BJ (cell line): ENCODE measurements at regions of chr18 and their contacts with region 1.

Region 1: GRCh38 chr18:55588001-55588869 is at the start of gene TCF4:
- DNase-seq: no peak
- H3K4me3 ChIP-seq: peak within 1 kb of the TSS; percentile 74
- H3K27me3 ChIP-seq: no peaks in the 10 kb centered on the region
- CTCF ChIP-seq: no peak
- polyA plus RNA-seq, gene TCF4: 65.8 and 68.3 TPM in 2 replicates

Region 2: GRCh38 chr18:55322178-55322735 is 266.0 kb before region 1 on chr18:
- CTCF ChIA-PET with region 1: no interaction called
- POLR2A ChIA-PET with region 1: interaction called, 11 read pairs
- DNase-seq: peak; percentile 74
- H3K4me3 ChIP-seq: peak overlapping the region; percentile 61
- H3K27me3 ChIP-seq: no peaks in the 10 kb centered on the region
- CTCF ChIP-seq: peak; percentile 15; the same call in 1 of the 2 replicates

Region 3: DNA sequence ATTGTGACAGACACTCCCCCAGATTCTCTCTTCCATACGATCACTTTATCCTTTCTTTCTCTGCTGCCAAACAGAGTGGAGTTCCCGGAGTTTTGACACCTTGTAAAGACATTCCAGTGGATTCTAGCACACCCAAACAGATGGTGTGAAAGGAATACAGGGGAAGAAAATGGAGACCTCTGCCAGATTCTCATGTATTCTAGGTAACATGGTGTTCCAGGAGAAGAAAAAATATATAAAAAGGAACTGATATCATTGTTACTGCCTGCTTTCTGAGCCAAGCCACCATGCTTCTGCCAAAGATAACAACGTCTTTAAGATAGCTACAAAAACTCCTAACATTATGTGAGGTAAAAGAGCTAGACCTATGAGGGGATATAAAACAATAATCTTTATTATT is 913.7 kb after region 1 on chr18:
- CTCF ChIA-PET with region 1: no interaction called
- POLR2A ChIA-PET with region 1: interaction called, 12 read pairs
- DNase-seq: no peak
- H3K4me3 ChIP-seq: no peak overlapping the region
- H3K27me3 ChIP-seq: no peaks in the 10 kb centered on the region
- CTCF ChIP-seq: no peak